ENCODE measurements at regions of chr17 and their contacts with region 1.

Region 1: DNA sequence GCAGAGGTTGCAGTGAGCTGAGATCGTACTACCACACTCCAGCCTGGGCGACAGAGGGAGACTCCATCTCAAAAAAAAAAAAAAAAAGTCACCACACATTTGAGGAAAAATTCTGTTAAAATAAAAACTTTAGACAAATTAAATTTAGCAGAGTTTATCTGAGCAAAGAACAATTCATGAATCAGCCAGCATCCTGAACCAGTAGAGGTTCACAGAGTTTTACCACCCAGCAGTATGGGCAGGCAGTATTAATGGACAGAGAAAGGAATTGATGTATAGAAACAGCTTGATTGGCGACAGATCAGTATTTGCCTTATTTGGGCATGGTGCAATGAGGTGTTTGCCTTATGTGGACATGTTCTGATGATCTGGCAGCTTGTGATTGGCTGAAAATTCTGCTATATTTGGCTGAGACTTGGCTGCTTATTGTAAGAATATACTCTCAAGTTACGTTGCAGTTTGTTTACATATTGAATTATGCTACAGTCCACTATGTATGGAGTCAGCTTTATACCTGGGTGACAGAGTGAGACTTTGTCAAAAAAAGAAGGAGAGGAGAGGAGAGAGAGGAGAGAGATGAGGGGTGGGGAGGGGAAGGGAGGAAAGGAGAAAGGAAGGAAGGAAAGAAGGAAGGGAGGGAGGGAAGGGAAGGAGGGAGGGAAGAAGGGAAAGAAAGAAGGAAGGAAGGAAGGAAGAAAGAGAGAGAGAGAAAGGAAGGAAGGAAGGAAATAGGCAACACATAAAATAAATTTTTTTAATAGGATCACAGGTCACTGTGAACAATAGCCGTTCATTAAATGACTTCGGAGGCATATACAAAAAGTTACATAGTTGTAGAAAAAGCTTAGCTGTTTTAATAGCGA is 14.6 kb downstream of the ABCC3 start:
- DNase-seq: no peak
- ATAC-seq: no peak
- H3K4me3 ChIP-seq: no peak overlapping the region
- H3K4me3 Mint-ChIP-seq: no peak overlapping the region
- H3K27ac ChIP-seq: no peak overlapping the region
- H3K27ac Mint-ChIP-seq: no peak overlapping the region
- H3K4me1 ChIP-seq: no peaks in the 10 kb centered on the region
- H3K4me1 Mint-ChIP-seq: no peaks in the 10 kb centered on the region
- H3K27me3 ChIP-seq: peaks cover 0 to 2% of the 10 kb centered on the region in 2 experiments
- H3K27me3 Mint-ChIP-seq: peaks cover 19% of the 10 kb centered on the region
- CTCF ChIP-seq: no peak

Region 2: GRCh38 chr17:50609380-50610074 is 39.7 kb before region 1 on chr17:
- CTCF ChIA-PET with region 1: no interaction called
- POLR2A ChIA-PET with region 1: no interaction called
- intact Hi-C with region 1: loop called in 1 of 2 experiments (anchors 2 kb)
- DNase-seq: no peak
- ATAC-seq: no peak
- H3K4me3 ChIP-seq: no peak overlapping the region
- H3K4me3 Mint-ChIP-seq: no peak overlapping the region
- H3K27ac ChIP-seq: no peak overlapping the region
- H3K27ac Mint-ChIP-seq: no peak overlapping the region
- H3K4me1 ChIP-seq: no peaks in the 10 kb centered on the region
- H3K4me1 Mint-ChIP-seq: no peaks in the 10 kb centered on the region
- H3K27me3 ChIP-seq: peaks cover 5 to 7% of the 10 kb centered on the region in 2 experiments
- H3K27me3 Mint-ChIP-seq: peaks cover 23% of the 10 kb centered on the region
- CTCF ChIP-seq: no peak

Region 3: DNA sequence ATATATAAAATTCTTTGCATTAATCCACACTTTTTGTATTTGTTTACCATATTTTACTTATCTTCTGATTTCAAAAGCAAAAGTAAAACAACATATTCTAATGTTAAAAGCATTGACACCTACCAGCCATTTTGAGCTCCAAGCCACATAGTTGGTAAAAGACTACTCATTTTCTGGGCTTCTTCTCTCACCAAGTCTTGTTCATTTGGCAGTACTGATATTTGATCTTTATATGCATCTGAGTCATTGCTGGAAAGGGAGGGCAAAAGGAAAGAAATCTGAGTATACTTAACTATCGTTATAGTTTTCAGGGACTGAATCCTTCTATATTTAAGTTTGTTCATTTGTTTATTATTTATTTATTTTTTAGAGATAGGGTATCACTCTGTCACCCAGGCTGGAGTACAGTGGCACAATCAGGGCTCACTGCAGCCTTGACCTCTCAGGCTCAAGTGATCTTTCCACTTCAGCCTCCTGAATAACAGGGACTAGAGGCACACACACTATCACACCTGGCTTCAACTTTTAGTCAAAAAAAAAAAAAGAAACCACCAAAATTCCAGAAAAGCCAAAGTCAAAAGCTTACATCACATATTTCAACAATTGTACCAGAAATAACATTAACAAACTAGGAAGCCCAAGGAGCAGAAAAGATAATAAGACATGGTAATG is 337.9 kb after region 1 on chr17:
- CTCF ChIA-PET with region 1: no interaction called
- POLR2A ChIA-PET with region 1: no interaction called
- intact Hi-C with region 1: no loop called
- DNase-seq: no peak
- ATAC-seq: no peak
- H3K4me3 ChIP-seq: no peak overlapping the region
- H3K4me3 Mint-ChIP-seq: no peak overlapping the region
- H3K27ac ChIP-seq: no peak overlapping the region
- H3K27ac Mint-ChIP-seq: no peak overlapping the region
- H3K4me1 ChIP-seq: no peaks in the 10 kb centered on the region
- H3K4me1 Mint-ChIP-seq: no peaks in the 10 kb centered on the region
- H3K27me3 ChIP-seq: no peaks in the 10 kb centered on the region
- H3K27me3 Mint-ChIP-seq: no peaks in the 10 kb centered on the region
- CTCF ChIP-seq: no peak

Measured in CD4-positive, alpha-beta T cell (primary cell).